T-cell (primary cell): ENCODE measurements at regions of chr12 and their contacts with region 1.

Region 1: GRCh38 chr12:25644979-25645378 is 91.9 kb upstream of the LMNTD1 start:
- DNase-seq: no peak
- ATAC-seq: no peak
- H3K4me3 ChIP-seq: no peak overlapping the region
- H3K4me3 Mint-ChIP-seq: no peak overlapping the region
- H3K27ac ChIP-seq: no peak overlapping the region
- H3K27ac Mint-ChIP-seq: no peak overlapping the region
- H3K4me1 ChIP-seq: no peaks in the 10 kb centered on the region
- H3K4me1 Mint-ChIP-seq: no peaks in the 10 kb centered on the region
- H3K27me3 ChIP-seq: no peaks in the 10 kb centered on the region
- H3K27me3 Mint-ChIP-seq: no peaks in the 10 kb centered on the region

Region 2: DNA sequence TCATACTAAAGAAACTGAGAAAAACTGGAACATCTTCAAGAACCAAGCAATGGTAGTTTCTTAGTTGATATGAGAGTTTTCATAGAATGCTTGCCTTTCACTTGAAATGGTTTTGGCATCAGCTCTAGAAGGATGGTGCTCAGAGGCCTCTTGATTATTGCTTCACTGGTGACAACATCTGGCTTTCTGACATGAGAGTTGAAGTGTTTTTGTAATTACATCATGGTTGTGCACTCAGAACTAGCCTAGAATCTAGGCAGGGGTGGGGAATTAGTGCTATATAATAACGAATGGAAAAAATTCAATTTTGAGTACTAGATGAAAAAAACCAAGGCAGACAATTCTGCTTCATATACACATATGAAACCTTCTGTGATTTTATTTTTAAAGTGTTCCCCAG is 81.0 kb after region 1 on chr12:
- CTCF ChIA-PET with region 1: no interaction called
- POLR2A ChIA-PET with region 1: no interaction called
- DNase-seq: no peak
- ATAC-seq: no peak
- H3K4me3 ChIP-seq: no peak overlapping the region
- H3K4me3 Mint-ChIP-seq: no peak overlapping the region
- H3K27ac ChIP-seq: no peak overlapping the region
- H3K27ac Mint-ChIP-seq: no peak overlapping the region
- H3K4me1 ChIP-seq: no peaks in the 10 kb centered on the region
- H3K4me1 Mint-ChIP-seq: no peaks in the 10 kb centered on the region
- H3K27me3 ChIP-seq: no peaks in the 10 kb centered on the region
- H3K27me3 Mint-ChIP-seq: no peaks in the 10 kb centered on the region

Region 3: DNA sequence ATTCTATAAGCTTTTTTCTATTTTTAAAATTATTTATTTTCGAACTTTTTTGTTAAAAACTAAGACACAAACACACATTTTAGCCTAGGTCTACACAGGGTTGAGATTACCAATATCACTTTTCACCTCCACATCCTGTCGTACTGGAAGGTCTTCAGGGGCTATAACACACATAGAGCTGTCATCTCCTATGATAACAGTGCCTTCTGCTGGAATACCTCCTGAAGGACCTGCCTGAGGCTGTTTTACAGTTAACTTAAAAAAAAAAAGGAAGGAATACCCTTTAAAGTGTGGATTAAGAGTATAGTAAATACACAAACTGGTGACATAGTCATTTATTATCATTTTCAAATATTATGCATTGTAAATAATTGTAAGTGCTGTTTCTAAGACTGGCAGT is 356.6 kb after region 1 on chr12:
- CTCF ChIA-PET with region 1: interaction called in 1 of 2 experiments, 10 read pairs
- POLR2A ChIA-PET with region 1: no interaction called
- DNase-seq: no peak
- ATAC-seq: no peak
- H3K4me3 ChIP-seq: no peak overlapping the region
- H3K4me3 Mint-ChIP-seq: no peak overlapping the region
- H3K27ac ChIP-seq: no peak overlapping the region
- H3K27ac Mint-ChIP-seq: no peak overlapping the region
- H3K4me1 ChIP-seq: no peaks in the 10 kb centered on the region
- H3K4me1 Mint-ChIP-seq: no peaks in the 10 kb centered on the region
- H3K27me3 ChIP-seq: no peaks in the 10 kb centered on the region
- H3K27me3 Mint-ChIP-seq: peaks cover 0 to 1% of the 10 kb centered on the region in 2 donors